Activated CD8-positive, alpha-beta T cell treated with anti-CD3 and anti-CD28 coated beads, Interleukin-2, amount 10 ng/mL, durations not matched to agents 7 days and 5 days (primary cell): ENCODE measurements at regions of chr14 and their contacts with region 1.

Region 1: DNA sequence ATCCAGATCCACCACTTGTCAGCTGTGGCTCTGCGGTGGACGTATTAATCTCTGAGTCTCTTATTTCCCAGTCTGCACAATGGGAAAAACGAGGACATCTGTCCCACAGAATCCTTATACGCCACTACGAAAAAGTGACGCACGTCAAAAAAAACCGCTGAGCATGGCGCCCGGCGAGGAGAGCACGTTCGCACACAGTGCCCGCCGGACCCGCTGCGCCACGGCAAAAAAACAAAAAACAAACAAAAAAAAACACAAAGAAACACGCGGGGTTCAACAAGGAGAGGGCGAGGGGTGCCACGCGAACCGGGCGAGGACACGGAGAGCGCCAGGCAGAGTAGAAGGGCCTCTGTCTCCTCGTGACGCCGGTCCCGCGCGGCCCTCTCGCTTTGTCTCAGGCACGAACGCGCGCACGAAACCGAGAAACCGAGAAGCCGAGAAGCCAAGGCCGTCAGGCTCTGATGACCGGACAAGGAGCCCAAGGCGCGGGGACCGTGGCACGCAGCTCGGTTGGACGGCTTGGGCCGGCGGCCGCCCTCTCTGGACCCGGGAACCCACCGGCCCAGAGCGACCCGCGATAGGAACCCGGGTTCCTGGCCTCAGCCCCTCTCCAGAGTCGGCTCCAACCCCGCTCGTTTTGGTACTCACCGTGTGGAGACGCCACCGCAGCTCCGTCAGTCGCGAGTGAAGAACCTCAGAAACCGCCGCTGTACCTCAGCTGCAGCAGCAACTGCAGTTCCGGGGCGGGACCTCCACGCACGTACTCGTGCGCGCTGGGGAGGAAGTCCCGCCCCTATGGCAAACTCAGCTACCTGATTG is at the start of gene DDX24:
- DNase-seq: peak; percentile 98
- ATAC-seq: peak; percentile 96
- H3K4me3 Mint-ChIP-seq: peak within 1 kb of the TSS; percentile 99
- H3K27ac Mint-ChIP-seq: peak within 1 kb of the TSS; percentile 99
- H3K4me1 Mint-ChIP-seq: peaks cover 52% of the 10 kb centered on the region
- H3K27me3 Mint-ChIP-seq: no peaks in the 10 kb centered on the region
- total RNA-seq, gene DDX24: 172 to 184 TPM

Region 2: DNA sequence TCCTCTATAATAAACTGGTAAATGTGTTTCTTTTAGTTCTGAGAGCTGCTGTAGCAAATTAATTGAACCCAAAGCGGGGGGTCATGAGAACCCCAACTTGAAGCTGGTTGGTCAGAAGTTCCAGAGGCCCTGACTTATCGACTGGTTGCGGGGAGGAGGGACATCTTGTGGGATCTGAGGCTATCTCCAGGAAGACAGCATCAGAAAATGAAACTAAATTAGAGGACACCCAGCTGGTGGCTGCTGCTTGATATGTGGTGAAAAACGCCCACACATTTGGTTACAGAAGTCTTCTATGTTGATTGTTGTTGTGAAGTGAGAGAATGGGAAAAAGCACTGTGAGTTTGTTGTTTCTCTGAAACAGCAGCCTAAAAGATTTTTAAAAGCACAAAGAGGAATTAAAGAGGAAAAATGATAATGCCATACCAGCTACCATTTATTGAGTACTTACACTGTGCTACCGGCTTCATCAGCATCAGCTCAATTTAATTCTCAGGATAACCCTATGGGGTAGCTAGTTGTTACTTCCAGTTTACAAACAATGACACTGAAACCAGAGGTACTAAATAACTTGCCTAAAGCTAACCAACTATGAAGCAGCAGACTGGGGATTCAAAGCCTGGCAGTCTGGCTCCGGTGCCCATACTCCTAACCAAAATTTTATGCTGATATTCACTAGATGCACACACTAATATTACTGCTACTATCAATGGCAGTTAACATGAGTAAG is 23.9 kb before region 1 on chr14:
- CTCF ChIA-PET with region 1: interaction called, 11 read pairs
- POLR2A ChIA-PET with region 1: interaction called, 5 read pairs
- DNase-seq: peak; percentile 59
- ATAC-seq: peak; percentile 66
- H3K4me3 Mint-ChIP-seq: peak overlapping the region; percentile 37
- H3K27ac Mint-ChIP-seq: peak overlapping the region; percentile 71
- H3K4me1 Mint-ChIP-seq: peaks cover 67% of the 10 kb centered on the region
- H3K27me3 Mint-ChIP-seq: no peaks in the 10 kb centered on the region

Region 3: DNA sequence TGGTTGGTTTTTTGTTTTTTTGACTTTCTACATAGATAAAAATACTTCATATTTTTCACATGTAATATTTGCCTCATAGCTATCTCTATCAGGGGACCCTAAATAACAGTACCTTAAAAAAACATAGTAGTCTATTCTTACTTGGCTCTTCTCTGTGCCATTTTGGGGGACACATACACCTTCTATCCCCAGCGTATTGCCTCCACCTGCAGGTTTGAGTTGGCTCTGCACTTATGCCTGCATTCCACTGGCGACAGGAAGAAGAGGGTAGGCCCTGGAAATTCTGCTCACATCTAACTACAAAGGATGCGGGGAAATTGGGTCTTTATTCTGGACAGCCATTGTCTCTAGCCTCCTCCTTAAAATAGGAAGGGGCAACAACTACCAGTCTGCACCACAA is 62.6 kb after region 1 on chr14:
- CTCF ChIA-PET with region 1: no interaction called
- POLR2A ChIA-PET with region 1: no interaction called
- DNase-seq: peak; percentile 49
- ATAC-seq: no peak
- H3K4me3 Mint-ChIP-seq: no peak overlapping the region
- H3K27ac Mint-ChIP-seq: no peak overlapping the region
- H3K4me1 Mint-ChIP-seq: peaks cover 27% of the 10 kb centered on the region
- H3K27me3 Mint-ChIP-seq: peaks cover 11% of the 10 kb centered on the region

Region 4: DNA sequence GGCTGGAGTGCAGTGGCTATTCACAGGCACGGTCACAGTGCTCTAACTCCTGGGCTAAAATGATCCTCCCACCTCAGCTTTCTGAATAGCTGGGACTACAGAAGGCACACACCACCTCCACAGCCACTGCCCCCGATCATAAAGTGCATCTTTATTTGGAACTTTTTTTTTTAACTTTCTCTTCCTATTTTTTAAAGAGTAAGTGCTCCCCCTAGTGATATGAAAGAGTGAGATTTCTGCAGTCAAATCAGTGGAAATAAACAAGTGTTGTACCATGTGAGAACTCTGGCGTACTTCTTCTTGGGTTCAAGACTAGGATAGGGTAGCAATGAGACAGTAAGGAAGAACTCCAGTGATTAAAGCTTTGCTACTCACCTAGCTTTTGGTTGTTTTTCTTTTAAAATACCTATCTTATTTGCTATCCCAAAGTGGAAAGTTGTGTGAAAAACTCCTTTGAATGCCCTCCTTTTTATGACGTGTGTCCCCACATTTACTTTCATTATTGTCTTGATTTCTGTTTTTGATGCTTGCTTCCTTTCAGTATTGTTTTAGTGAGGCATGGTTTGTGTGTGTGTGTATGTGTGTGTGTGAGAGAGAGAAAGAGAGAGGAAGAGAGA is 100.1 kb after region 1 on chr14:
- CTCF ChIA-PET with region 1: interaction called, 10 read pairs
- POLR2A ChIA-PET with region 1: no interaction called
- DNase-seq: peak; percentile 27
- ATAC-seq: peak; percentile 87
- H3K4me3 Mint-ChIP-seq: peak overlapping the region; percentile 36
- H3K27ac Mint-ChIP-seq: peak overlapping the region; percentile 0
- H3K4me1 Mint-ChIP-seq: peaks cover 9% of the 10 kb centered on the region
- H3K27me3 Mint-ChIP-seq: peaks cover 50% of the 10 kb centered on the region